ENCODE measurements at regions of chr6 and their contacts with region 1.

Region 1: GRCh38 chr6:89829591-89830385 is at the start of gene CASP8AP2:
- DNase-seq: peak; percentile 97
- total RNA-seq, gene CASP8AP2: 18.2 to 18.8 TPM

Region 2: GRCh38 chr6:89817481-89817880 is 12.3 kb before region 1 on chr6:
- intact Hi-C with region 1: loop called in 1 of 2 experiments (anchors 2 kb)
- DNase-seq: no peak